ENCODE measurements at regions of chr10 and their contacts with region 1.

Region 1: DNA sequence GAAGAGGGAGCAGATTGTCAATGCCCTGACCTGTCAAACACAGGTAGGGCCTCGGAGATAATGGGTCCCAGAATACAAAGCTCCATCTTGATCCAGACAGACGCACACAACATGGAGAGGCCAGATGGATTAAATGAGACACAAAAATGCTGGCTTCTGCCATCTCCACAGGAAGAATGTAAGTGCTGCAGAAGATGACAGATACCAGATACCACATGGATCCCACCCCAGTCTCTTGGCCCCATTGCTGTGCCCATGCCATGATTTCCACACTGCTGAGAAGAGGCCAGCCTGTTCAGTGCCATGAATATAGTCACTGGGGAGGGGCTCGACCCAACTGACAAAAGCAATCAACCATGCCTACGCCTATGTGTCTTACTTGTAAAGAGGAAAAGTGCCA is 487.9 kb downstream of the PARD3 start:
- DNase-seq: no peak
- ATAC-seq: no peak
- H3K4me3 ChIP-seq: no peak overlapping the region
- H3K27ac ChIP-seq: no peak overlapping the region
- H3K4me1 ChIP-seq: no peaks in the 10 kb centered on the region
- H3K27me3 ChIP-seq: no peaks in the 10 kb centered on the region
- CTCF ChIP-seq: no peak
- EP300 ChIP-seq: no peak
- POLR2A ChIP-seq: no peak
- RAD21 ChIP-seq: no peak

Region 2: DNA sequence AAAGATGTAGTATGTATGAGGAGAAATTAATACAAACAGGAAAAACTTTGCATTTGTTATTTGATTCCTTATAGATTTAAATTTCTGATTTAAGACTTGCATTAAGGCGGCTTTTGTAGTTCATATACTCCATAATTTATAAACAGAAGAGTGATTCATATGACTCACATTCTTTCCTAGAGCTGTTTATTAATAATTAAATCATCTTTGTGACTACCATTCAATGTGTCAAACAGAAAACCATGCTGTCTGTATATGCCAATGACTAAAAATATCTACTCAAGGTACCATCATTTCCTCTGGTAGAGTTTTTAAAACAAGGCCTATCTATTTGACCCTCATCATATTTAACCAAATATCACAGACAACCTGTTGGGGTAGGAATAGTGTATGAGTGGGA is 13.8 kb before region 1 on chr10:
- CTCF ChIA-PET with region 1: interaction called, 4 read pairs
- POLR2A ChIA-PET with region 1: no interaction called
- RAD21 ChIA-PET with region 1: interaction called, 3 read pairs
- SMC1A ChIA-PET with region 1: interaction called, 16 read pairs
- in situ Hi-C with region 1: no loop called
- intact Hi-C with region 1: no loop called
- DNase-seq: no peak
- ATAC-seq: no peak
- H3K4me3 ChIP-seq: no peak overlapping the region
- H3K27ac ChIP-seq: no peak overlapping the region
- H3K4me1 ChIP-seq: no peaks in the 10 kb centered on the region
- H3K27me3 ChIP-seq: no peaks in the 10 kb centered on the region
- CTCF ChIP-seq: no peak
- EP300 ChIP-seq: no peak
- POLR2A ChIP-seq: no peak
- RAD21 ChIP-seq: no peak